Cardiac septum (tissue), 1 donor: ENCODE measurements at regions of chr7 and their contacts with region 1.

Region 1: GRCh38 chr7:1691601-1692514 is 21.8 kb downstream of the ELFN1 start:
- DNase-seq: peak; percentile 80

Region 2: DNA sequence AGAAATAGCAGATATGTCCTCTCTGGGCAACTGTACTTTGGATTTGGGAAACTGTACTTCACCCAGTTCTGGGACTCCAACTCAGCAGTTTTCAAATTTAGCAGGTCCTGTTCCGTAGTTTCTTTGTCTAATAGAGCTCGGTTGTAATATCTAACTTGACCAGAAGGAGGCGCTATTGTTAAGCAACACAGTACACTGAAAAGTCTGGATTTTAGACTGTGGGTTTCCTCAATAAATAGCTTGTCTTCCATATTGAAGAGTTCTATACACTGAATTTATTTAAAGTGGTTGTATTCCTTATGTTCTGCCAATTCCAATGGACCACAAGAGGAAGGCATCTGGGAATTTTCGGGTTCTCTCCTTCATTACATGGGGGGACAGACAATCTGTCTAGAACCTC is 18.0 kb after region 1 on chr7:
- intact Hi-C with region 1: loop called (anchors 1 kb)
- DNase-seq: no peak